Dendritic cell treated with granulocyte-macrophage colony-stimulating factor and Interleukin-4, amounts not matched to agents 40 ng/mL and 50 ng/mL, for 4 days (primary cell): ENCODE measurements at regions of chr17 and their contacts with region 1.

Region 1: DNA sequence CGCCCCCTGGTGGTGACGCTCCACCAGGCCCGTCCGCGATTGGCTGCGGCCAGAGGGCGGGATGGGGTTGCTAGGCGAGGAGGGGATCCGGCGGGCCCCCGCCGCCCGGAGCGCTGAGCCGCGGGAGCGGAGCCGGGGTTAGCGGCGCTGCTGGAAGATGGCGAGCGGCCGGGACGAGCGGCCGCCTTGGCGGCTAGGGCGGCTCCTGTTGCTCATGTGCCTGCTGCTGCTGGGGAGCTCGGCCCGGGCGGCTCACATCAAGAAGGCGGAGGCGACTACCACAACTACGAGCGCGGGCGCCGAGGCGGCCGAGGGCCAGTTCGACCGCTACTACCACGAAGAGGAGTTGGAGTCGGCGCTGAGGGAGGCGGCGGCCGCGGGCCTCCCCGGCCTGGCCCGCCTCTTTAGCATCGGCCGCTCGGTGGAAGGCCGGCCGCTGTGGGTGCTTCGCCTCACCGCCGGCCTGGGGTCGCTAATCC is at the start of gene CPD:
- H3K4me3 Mint-ChIP-seq: peak within 1 kb of the TSS; percentile 79
- H3K27ac Mint-ChIP-seq: peak within 1 kb of the TSS; percentile 55
- H3K4me1 Mint-ChIP-seq: peaks cover 48% of the 10 kb centered on the region
- H3K27me3 Mint-ChIP-seq: peaks cover 8% of the 10 kb centered on the region

Region 2: DNA sequence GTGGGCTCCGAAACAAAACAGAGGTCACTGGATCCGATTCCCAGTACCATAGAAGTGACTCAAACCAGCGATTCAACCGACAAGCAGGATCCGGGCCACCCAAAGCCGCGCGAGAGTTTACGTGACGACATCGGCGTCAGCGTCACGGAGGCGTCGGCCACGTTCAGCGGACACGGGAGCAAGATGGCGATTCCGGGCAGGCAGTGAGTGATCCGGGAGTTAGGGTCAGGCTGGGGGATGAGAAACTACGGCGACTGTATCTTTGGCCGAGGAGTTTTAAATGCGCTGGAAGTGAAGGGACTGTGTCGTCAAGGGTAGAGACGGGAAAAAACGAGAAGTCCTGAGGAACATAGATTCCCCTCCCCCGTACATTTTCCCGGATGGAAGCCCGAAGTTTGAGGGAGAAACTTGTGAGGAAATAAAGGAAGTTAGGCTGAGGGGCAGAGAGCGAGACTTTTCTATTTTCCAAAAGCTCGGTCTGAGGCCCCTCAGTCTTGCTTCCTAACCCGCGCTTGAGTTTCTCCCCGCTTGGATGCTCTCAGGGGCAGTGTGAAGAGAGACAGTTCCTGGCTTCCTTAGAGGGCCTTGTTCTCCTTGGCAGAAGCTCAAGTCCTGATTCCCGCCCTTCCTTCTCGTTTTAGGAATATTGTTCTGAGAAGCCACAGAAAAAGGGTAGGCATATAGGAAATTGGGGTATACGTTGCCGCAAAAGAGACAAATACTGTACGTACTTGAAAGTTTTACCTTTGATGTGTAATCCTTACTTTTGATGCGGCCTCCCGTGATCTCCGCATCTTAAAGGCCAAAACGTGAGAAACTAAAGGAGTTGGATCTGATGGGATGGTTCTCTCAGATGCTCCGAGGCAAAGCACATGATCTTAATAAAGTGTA is 262.0 kb before region 1 on chr17 and contains the start of gene NSRP1:
- intact Hi-C with region 1: loop called (anchors 2 kb)
- H3K4me3 Mint-ChIP-seq: peak within 1 kb of the TSS; percentile 83
- H3K27ac Mint-ChIP-seq: peak within 1 kb of the TSS; percentile 97
- H3K4me1 Mint-ChIP-seq: peaks cover 21% of the 10 kb centered on the region
- H3K27me3 Mint-ChIP-seq: no peaks in the 10 kb centered on the region

Region 3: GRCh38 chr17:30291543-30292285 is 87.1 kb before region 1 on chr17 and contains the start of gene BLMH:
- intact Hi-C with region 1: loop called (anchors 5 kb)
- H3K4me3 Mint-ChIP-seq: peak within 1 kb of the TSS; percentile 82
- H3K27ac Mint-ChIP-seq: peak within 1 kb of the TSS; percentile 67
- H3K4me1 Mint-ChIP-seq: peaks cover 5% of the 10 kb centered on the region
- H3K27me3 Mint-ChIP-seq: peaks cover 4% of the 10 kb centered on the region

Region 4: DNA sequence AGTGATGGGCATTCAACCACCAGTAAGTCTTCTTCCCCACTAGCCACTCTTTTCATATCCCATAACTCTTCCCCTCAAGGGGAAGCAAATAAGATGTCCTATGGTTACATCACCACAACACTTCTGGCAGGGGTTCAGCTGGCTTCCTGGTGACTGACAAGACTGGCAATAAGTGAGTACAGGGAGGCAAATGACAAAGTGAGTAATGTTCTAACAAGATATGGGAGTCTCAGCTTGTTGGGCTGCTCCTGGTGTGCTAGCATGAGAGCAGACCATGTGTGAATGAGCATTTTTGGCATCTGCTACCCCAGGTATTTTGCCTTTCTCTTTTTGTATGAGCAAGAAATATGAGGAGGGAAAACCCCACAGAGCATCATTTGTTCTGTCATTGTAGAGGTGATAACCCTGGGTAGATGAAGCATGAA is 55.0 kb before region 1 on chr17:
- intact Hi-C with region 1: no loop called
- H3K4me3 Mint-ChIP-seq: no peak overlapping the region
- H3K27ac Mint-ChIP-seq: no peak overlapping the region
- H3K4me1 Mint-ChIP-seq: peaks cover 14% of the 10 kb centered on the region
- H3K27me3 Mint-ChIP-seq: no peaks in the 10 kb centered on the region

Region 5: DNA sequence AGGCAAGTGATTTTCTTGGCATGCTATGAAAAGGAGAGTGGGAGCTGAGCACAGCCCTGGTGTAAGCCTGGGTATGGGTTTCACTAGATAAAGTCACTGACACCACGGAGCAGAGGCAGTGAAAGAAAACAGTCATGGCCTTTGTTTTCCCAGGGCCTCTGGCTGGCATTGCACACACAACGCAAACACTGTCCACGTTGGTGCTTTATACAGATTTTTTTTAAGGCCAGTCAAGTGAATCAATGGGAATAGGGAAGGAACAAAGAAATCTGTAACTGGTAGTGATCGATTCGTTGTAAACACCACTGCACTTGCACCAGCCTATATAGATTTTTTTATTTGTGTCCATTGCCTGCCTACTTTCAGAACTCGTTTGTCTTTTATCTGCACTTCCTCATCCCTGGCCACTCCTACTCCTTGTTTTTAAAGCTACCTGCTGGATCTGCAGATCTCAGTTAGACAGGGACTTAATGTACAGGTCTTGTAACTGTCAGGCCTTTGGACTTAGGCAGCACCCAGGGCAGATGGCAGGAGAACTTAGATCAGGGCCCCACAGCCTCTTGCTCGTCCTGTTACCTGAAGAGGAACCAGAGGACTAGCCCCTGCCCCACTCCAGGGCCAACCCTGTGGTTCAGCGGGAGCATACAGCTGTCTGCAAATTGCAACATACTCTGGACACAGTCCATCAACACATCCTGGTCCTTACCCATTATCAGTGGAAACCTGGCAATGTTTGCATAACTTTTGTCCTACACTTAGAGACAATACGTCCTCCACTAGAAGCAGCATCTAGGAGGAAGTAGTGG is 34.4 kb before region 1 on chr17:
- intact Hi-C with region 1: loop called (anchors 5 kb)
- H3K4me3 Mint-ChIP-seq: peak overlapping the region; percentile 23
- H3K27ac Mint-ChIP-seq: peak overlapping the region; percentile 70
- H3K4me1 Mint-ChIP-seq: peaks cover 31% of the 10 kb centered on the region
- H3K27me3 Mint-ChIP-seq: no peaks in the 10 kb centered on the region